ENCODE measurements at regions of chr20 and their contacts with region 1.

Region 1: GRCh38 chr20:35447082-35447789 is 8.2 kb upstream of the CEP250 start:
- DNase-seq: peak; percentile 93
- H3K4me3 ChIP-seq: peak overlapping the region in 3 of 4 donors; percentile 28 to 49 (median 34)
- H3K27ac ChIP-seq: no peak overlapping the region
- H3K4me1 ChIP-seq: peaks cover 0 to 6% (median 2%) of the 10 kb centered on the region in 4 donors
- H3K27me3 ChIP-seq: peaks cover 8% of the 10 kb centered on the region
- CTCF ChIP-seq: peak; percentile 91 to 96 (median 93)
- EP300 ChIP-seq: no peak
- POLR2A ChIP-seq: no peak

Region 2: GRCh38 chr20:35297155-35297554 is 150.1 kb before region 1 on chr20:
- in situ Hi-C with region 1: loop called (anchors 5 to 10 kb)
- intact Hi-C with region 1: no loop called
- DNase-seq: no peak
- H3K4me3 ChIP-seq: no peak overlapping the region
- H3K27ac ChIP-seq: no peak overlapping the region
- H3K4me1 ChIP-seq: peaks cover 0 to 5% (median 0%) of the 10 kb centered on the region in 4 donors
- H3K27me3 ChIP-seq: peaks cover 8% of the 10 kb centered on the region
- CTCF ChIP-seq: no peak
- EP300 ChIP-seq: no peak
- POLR2A ChIP-seq: no peak

Region 3: DNA sequence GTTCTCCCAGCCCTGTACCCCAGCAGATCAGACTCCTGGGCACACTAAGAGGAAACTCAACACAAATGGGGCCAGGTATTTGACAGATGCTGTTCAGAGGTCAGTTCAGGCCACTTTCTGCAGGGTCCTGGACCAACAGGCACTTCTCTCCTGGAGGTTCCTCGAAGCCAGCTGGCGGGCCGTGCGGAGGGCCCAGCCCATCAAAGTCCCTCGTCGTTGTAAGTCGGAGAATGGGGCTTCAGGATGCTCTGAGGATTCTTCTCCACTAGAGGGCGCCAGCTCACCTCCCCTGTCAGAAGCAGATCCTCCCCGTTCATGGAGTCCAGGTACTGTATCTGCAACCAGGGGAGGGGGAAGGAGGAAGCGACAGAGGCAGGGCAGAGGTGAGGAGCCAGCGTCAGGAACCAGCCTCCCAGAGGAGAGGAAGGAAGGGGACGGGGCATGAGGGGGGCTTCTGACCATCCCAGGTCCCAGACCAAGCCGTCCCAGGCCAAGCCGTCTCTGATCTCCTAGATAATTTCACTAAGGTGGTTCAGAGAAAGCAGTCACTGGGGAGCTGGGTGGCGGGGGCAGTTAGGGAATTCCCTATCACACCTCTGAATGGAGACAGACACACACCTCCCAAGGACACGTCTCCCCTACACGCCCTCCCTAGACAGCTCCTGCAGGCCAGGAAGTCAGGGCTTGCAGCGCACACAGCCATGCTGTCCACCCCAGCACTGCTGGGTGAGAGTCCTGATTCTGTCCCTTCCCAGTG is 143.3 kb before region 1 on chr20:
- in situ Hi-C with region 1: loop called (anchors 5 to 10 kb)
- intact Hi-C with region 1: no loop called
- DNase-seq: peak; percentile 87
- H3K4me3 ChIP-seq: no peak overlapping the region
- H3K27ac ChIP-seq: peak overlapping the region in 2 of 4 donors; percentile 17 to 19
- H3K4me1 ChIP-seq: peaks cover 17 to 48% (median 28%) of the 10 kb centered on the region in 4 donors
- H3K27me3 ChIP-seq: no peaks in the 10 kb centered on the region
- CTCF ChIP-seq: peak; percentile 89 to 95 (median 93)
- EP300 ChIP-seq: no peak
- POLR2A ChIP-seq: no peak

Measured in transverse colon (tissue), 4 donors.